Activated B cell treated with CpG ODN at 0.5 μM for 24 hours (primary cell): ENCODE measurements at regions of chr3 and their contacts with region 1.

Region 1: DNA sequence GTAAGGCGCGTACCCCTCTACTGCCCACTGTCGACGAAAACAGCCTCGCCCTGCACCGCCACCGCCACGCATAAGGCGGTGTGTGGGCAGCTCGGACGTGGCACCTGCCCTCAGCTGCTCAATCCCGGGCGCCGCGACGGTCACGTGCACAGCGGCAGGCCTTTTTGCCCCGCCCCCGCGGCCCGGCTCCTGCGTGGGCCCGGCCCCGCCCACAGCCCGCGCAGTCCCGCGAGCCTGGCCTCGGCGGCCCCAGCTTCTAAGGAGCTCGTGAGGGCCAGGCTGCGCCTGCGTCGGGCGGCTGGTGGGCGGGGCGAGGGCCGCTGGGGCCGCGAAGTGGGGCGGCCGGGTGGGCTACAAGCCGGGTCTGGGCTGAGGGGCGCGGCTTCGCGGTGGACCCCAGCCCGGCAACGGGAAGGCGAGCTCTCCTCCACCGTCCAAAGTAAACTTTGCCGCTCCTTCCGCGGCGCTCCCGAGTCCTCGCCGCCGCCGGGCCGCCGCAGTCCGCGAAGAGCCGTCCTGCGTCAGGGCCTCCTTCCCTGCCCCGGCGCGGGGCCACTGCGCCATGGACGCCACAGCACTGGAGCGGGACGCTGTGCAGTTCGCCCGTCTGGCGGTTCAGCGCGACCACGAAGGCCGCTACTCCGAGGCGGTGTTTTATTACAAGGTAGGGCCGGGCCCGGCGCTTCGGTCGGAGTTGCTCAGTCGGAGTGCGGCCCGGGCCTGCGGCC is at the start of gene CAPN7:
- DNase-seq: peak; percentile 97
- ATAC-seq: peak; percentile 90
- H3K4me3 Mint-ChIP-seq: peak within 1 kb of the TSS; percentile 89
- H3K27ac Mint-ChIP-seq: peak within 1 kb of the TSS; percentile 87
- H3K4me1 Mint-ChIP-seq: peaks cover 24% of the 10 kb centered on the region
- H3K27me3 Mint-ChIP-seq: no peaks in the 10 kb centered on the region
- CTCF ChIP-seq: no peak
- total RNA-seq, gene CAPN7: 35.0 and 45.1 TPM in 2 replicates

Region 2: DNA sequence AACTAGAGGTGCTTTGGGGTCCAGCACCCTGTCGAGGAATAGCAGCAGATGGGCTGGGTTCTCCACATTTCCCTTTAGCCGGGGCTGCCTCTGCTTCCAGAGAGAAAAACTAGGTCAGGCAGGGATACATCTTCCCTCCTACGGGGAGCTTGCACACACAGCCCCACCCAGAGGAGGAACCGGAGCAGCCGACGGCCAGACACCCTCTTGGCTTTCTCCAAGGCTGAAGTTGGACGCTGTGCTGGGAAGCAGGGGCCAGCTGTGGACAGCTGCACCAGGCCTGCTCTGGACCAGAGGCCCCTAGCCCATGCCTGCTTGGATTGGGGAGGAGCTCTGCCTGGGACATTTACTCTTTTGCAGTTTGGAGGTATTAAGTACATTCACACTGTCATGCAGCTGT is 303.4 kb before region 1 on chr3:
- CTCF ChIA-PET with region 1: no interaction called
- POLR2A ChIA-PET with region 1: no interaction called
- intact Hi-C with region 1: no loop called
- DNase-seq: no peak
- ATAC-seq: no peak
- H3K4me3 Mint-ChIP-seq: no peak overlapping the region
- H3K27ac Mint-ChIP-seq: no peak overlapping the region
- H3K4me1 Mint-ChIP-seq: no peaks in the 10 kb centered on the region
- H3K27me3 Mint-ChIP-seq: peaks cover 28% of the 10 kb centered on the region
- CTCF ChIP-seq: no peak

Region 3: GRCh38 chr3:14947886-14948555 is 258.1 kb before region 1 on chr3:
- CTCF ChIA-PET with region 1: no interaction called
- POLR2A ChIA-PET with region 1: no interaction called
- intact Hi-C with region 1: loop called (anchors 1 kb)
- DNase-seq: peak; percentile 96
- ATAC-seq: peak; percentile 88
- H3K4me3 Mint-ChIP-seq: peak overlapping the region; percentile 99
- H3K27ac Mint-ChIP-seq: peak overlapping the region; percentile 100
- H3K4me1 Mint-ChIP-seq: peaks cover 55% of the 10 kb centered on the region
- H3K27me3 Mint-ChIP-seq: no peaks in the 10 kb centered on the region
- CTCF ChIP-seq: no peak

Region 4: DNA sequence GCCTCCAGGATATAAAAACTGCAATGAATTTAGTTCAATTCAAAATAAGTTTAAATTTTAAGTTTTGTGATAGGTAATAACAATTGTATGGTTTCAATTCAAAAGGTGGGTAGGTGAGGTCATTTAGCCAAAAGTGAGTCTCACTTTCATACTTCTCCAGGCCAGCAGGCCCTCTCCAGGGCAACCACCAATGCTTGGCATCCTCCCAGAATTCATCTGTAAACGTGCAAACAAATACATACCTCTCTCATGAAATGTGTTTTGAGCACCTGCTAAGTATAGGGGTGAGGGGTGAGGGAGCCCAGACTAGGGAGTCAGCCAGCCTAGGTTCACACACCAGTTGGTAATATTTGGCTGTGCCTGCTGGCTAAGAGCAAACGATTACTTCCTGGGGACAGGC is 85.1 kb before region 1 on chr3:
- CTCF ChIA-PET with region 1: interaction called, 9 read pairs
- POLR2A ChIA-PET with region 1: no interaction called
- intact Hi-C with region 1: loop called (anchors 2 kb)
- DNase-seq: no peak
- ATAC-seq: no peak
- H3K4me3 Mint-ChIP-seq: no peak overlapping the region
- H3K27ac Mint-ChIP-seq: no peak overlapping the region
- H3K4me1 Mint-ChIP-seq: peaks cover 4% of the 10 kb centered on the region
- H3K27me3 Mint-ChIP-seq: no peaks in the 10 kb centered on the region
- CTCF ChIP-seq: no peak

Region 5: DNA sequence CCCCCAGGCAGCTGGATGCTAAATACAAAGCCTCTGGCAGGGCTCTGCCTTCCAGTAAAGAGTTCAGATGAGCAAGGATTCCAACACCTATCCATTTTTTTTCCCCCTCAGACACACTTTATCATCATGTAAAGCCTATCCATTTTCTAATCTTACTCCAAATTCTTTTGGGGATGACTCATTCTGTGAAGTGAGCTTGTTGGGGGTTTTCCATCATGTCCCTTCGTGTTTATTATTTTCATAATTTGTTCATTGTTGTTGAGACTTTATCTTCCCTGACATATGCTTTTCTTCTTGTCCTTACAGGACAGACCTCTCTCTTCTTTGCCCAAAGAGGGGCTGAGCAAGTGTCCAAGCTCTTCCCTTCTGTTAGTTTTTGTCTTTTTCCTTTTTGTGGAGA is 161.0 kb after region 1 on chr3:
- CTCF ChIA-PET with region 1: no interaction called
- POLR2A ChIA-PET with region 1: no interaction called
- intact Hi-C with region 1: no loop called
- DNase-seq: no peak
- ATAC-seq: no peak
- H3K4me3 Mint-ChIP-seq: no peak overlapping the region
- H3K27ac Mint-ChIP-seq: peak overlapping the region; percentile 57
- H3K4me1 Mint-ChIP-seq: peaks cover 53% of the 10 kb centered on the region
- H3K27me3 Mint-ChIP-seq: no peaks in the 10 kb centered on the region
- CTCF ChIP-seq: no peak

Region 6: DNA sequence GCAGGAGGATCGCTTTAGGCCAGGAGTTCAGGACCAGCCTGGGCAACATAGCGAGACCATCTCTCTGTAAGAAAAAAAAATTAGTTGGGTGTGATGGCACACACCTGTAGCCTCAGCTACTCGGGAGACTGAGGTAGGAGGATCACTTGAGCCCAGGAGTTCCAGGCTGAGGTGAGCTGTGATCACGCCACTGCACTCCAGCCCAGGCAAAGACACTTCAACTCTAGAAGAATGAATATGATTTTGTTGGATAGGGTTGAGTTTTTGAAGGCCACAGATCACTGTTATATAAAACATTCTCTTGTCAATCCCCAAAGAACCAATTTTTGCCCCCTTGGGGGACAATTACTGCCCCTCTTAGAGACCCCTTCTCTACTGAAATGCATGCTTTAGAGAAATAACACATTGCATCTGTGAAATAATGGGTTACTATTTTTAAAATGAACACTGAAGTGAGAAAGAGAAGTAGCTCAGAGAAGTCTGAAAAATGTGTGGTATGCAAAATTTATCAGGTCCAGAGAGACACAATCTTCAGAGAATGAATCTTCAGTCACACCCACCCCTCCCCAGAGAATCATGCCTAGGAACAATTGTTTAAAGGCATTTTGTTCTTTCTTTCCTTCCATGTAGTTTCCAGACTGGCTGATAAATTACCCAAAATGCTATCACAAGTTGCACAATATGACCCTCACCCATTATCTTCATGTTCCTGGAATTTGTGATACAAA is 178.6 kb after region 1 on chr3:
- CTCF ChIA-PET with region 1: interaction called, 5 read pairs
- POLR2A ChIA-PET with region 1: interaction called, 11 read pairs
- intact Hi-C with region 1: no loop called
- DNase-seq: no peak
- ATAC-seq: peak; percentile 90
- H3K4me3 Mint-ChIP-seq: peak overlapping the region; percentile 71
- H3K27ac Mint-ChIP-seq: peak overlapping the region; percentile 95
- H3K4me1 Mint-ChIP-seq: peaks cover 79% of the 10 kb centered on the region
- H3K27me3 Mint-ChIP-seq: no peaks in the 10 kb centered on the region
- CTCF ChIP-seq: no peak

Region 7: GRCh38 chr3:15601397-15602145 is 395.5 kb after region 1 on chr3 and contains the starts of genes BTD and HACL1:
- CTCF ChIA-PET with region 1: no interaction called
- POLR2A ChIA-PET with region 1: no interaction called
- intact Hi-C with region 1: loop called (anchors 1 kb)
- DNase-seq: peak; percentile 97
- ATAC-seq: peak; percentile 89
- H3K4me3 Mint-ChIP-seq: peak within 1 kb of the TSS; percentile 94
- H3K27ac Mint-ChIP-seq: peak within 1 kb of the TSS; percentile 98
- H3K4me1 Mint-ChIP-seq: peaks cover 38% of the 10 kb centered on the region
- H3K27me3 Mint-ChIP-seq: no peaks in the 10 kb centered on the region
- CTCF ChIP-seq: no peak
- total RNA-seq, gene BTD: 7.6 and 9.1 TPM in 2 replicates
- total RNA-seq, gene HACL1: 24.7 and 28.4 TPM in 2 replicates

Region 8: GRCh38 chr3:15859507-15860013 is 653.5 kb after region 1 on chr3:
- CTCF ChIA-PET with region 1: no interaction called
- POLR2A ChIA-PET with region 1: no interaction called
- intact Hi-C with region 1: loop called (anchors 1 kb)
- DNase-seq: peak; percentile 77
- ATAC-seq: peak; percentile 77
- H3K4me3 Mint-ChIP-seq: peak overlapping the region; percentile 99
- H3K27ac Mint-ChIP-seq: peak overlapping the region; percentile 95
- H3K4me1 Mint-ChIP-seq: peaks cover 27% of the 10 kb centered on the region
- H3K27me3 Mint-ChIP-seq: no peaks in the 10 kb centered on the region
- CTCF ChIP-seq: no peak